ENCODE measurements at regions of chr7 and their contacts with region 1.

Region 1: GRCh38 chr7:99837649-99838361 is 10.0 kb downstream of the CYP3A43 start:
- DNase-seq: peak; percentile 36
- ATAC-seq: peak; percentile 69
- H3K4me3 ChIP-seq: no peak overlapping the region
- H3K27ac ChIP-seq: no peak overlapping the region
- H3K4me1 ChIP-seq: no peaks in the 10 kb centered on the region
- H3K27me3 ChIP-seq: no peaks in the 10 kb centered on the region; a peak in 1 of 4 replicates
- CTCF ChIP-seq: peak; percentile 31 to 51 (median 46); a peak in 4 of 6 replicates
- EP300 ChIP-seq: no peak
- POLR2A ChIP-seq: no peak
- RAD21 ChIP-seq: peak; percentile 57

Region 2: DNA sequence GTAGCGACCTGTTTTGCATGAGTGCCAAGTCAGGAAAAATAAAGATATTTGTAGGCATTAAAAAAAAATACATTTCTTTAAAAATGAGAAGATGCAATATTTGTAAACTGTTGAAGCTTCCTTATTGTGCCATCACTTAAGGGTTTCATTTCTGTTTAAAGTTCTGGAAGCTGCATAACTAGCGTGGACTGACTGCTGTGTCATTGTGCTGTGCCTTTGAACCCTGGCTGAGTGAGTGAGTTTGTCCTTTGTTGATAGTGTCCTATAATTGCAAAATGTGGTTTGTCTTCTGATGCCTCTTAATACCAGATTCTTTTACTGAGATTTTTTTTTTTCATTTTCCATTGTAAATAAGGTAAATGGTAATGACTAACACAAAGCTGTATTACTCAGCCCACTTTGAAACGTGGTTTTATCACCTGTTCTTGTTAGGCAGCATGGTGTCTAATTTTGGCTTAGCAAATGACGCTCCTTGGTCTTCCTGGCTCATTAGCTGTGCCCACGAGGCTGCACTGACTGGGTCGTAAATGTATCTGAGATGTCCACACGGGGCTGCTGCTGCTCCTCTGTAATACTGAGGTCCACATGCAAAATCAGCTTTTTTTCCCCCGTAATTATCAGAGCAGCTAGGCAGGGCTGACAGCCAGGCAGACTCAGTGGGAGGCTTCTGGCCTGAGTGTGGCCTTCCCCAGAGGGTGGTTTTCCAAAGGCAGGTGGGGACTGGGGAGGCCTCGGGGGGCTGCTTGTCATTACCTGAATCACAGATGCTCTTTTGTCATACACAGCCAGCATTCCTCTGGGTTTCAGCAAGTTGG is 206.3 kb before region 1 on chr7:
- CTCF ChIA-PET with region 1: interaction called, 5 read pairs
- POLR2A ChIA-PET with region 1: no interaction called
- RAD21 ChIA-PET with region 1: interaction called, 3 read pairs
- SMC1A ChIA-PET with region 1: interaction called, 3 read pairs
- in situ Hi-C with region 1: no loop called
- intact Hi-C with region 1: loop called (anchors 5 kb)
- DNase-seq: no peak
- ATAC-seq: peak; percentile 61
- H3K4me3 ChIP-seq: no peak overlapping the region
- H3K27ac ChIP-seq: no peak overlapping the region
- H3K4me1 ChIP-seq: no peaks in the 10 kb centered on the region
- H3K27me3 ChIP-seq: no peaks in the 10 kb centered on the region
- CTCF ChIP-seq: peak; percentile 8 to 32 (median 15); a peak in 3 of 6 replicates
- EP300 ChIP-seq: no peak
- POLR2A ChIP-seq: 0 out of 2 replicates have a peak, but pooled peaks have one; percentile 17
- RAD21 ChIP-seq: 0 out of 2 replicates have a peak, but pooled peaks have one; percentile 27

Region 3: DNA sequence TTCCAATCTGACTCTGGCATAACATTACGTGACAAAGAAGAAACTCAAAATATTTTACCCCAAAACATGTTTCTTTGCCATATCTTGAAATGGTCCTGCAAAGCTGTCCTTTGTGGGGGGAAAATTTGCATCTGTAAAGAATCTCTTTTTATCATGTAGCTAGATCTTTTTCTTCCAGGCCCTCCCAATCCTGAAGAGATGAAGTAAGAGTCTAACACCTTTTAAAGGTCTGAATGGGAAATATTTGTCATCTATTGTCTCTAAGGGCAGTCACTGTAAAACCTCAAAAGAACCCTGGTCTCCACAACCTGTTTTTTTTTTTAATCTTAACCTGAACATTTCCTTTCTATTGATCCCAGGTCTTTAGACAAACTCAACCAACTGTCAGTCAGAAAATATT is 30.4 kb after region 1 on chr7:
- CTCF ChIA-PET with region 1: no interaction called
- POLR2A ChIA-PET with region 1: no interaction called
- RAD21 ChIA-PET with region 1: no interaction called
- SMC1A ChIA-PET with region 1: no interaction called
- in situ Hi-C with region 1: no loop called
- intact Hi-C with region 1: no loop called
- DNase-seq: no peak
- ATAC-seq: no peak
- H3K4me3 ChIP-seq: no peak overlapping the region
- H3K27ac ChIP-seq: no peak overlapping the region
- H3K4me1 ChIP-seq: no peaks in the 10 kb centered on the region
- H3K27me3 ChIP-seq: no peaks in the 10 kb centered on the region; a peak in 1 of 4 replicates
- CTCF ChIP-seq: no peak
- EP300 ChIP-seq: no peak
- POLR2A ChIP-seq: no peak
- RAD21 ChIP-seq: no peak